Natural killer cell (primary cell): ENCODE measurements at regions of chr1 and their contacts with region 1.

Region 1: DNA sequence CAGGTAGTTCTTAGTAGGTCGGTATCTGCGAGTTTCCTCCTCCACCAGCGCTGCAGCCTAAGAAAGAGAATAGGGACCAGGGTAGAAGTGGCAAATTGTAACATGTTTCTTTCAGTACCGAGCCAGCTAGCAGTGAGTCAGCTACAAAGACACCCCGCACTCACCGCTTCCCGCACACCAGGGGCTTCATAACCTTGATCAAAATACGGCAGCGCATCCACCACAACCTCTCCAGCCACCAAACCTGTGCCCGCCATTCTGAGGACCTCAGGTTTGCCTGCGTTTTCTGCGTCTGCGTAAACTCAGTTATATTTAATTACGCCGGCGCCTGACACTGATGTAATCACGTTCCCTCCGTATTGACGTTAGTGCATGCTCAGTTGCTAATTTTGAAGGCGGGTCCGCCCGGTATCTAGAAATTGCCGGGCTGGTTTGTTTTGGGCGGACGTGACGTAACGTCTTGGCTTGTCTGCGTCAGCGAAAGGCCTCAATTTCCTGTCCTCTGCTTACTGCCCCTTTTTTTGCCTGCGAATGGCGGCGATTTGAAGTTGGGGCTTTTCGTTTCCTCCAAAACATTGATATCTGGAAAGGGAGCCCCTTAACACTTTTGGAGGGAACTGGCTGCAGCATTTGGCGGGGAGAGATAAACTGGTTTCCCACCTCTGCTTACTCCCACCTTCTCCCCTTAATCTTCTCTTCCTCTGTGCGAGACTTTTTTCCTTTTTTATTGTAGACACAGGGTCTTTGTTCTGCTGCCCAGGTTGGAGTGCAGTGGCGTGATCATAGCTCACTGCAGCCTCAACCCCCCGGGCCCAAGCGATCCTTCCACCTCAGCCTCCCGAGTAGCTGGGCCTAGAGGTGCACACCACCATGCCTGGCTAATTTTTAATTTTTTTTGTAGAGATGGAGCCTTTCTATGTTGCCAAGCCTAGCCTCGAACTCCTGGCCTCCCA is at the start of gene BCAS2:
- DNase-seq: peak; percentile 91 to 99
- ATAC-seq: peak; percentile 93 to 97 (median 95)
- H3K4me3 ChIP-seq: peak within 1 kb of the TSS; percentile 75
- H3K4me3 Mint-ChIP-seq: peak within 1 kb of the TSS; percentile 96
- H3K27ac ChIP-seq: peak within 1 kb of the TSS; percentile 95
- H3K27ac Mint-ChIP-seq: peak within 1 kb of the TSS; percentile 98 to 99
- H3K4me1 ChIP-seq: peaks cover 8% of the 10 kb centered on the region
- H3K4me1 Mint-ChIP-seq: peaks cover 30 to 33% of the 10 kb centered on the region in 2 donors
- H3K27me3 ChIP-seq: peaks cover 4% of the 10 kb centered on the region
- H3K27me3 Mint-ChIP-seq: peaks cover 4 to 21% of the 10 kb centered on the region in 2 donors
- CTCF ChIP-seq: no peak
- total RNA-seq, gene BCAS2: 45.5 to 76.7 (median 62.0) TPM

Region 2: DNA sequence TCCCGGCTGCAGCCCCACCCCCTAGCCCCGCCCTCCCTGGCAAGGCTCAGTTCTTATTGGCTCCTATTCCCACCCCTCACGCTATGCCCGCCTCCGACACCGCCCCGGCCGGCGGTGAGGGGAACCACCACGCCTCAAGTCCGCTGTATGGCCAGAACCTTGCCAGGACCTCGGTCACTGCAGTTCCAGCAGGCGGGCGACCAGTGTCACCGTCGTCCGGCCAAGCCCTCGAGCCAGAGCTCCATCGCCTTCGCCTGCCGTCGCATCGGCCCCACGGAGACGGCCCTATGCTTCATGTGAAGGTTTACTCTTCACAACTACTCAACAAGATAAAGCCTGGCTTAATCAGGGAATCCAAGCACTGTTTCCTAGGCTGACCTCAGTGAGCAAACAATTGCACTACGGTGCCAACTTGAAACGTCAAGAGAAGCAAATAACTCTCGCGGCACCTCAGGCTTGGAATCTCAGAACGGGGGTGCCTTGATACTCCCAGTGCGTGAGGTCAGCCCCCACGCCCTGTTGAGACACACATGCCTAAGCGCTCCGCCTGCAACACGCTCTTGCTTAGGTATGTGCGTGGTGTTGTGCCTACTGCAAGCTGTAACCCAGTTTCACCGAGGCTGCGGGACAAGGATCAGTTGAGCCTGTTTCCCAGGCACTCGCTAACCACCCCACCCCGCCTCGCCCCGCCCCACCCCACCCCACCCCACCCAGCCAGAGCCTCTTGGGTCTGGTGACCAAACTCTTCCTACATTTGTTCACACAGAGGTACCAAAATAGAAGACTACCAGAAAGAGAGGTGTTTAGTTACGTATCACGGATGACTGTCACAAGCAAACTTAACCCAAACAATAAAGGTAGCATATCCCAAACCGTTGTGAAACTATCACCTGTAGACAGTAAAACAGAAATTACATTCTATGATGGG is 88.7 kb after region 1 on chr1:
- intact Hi-C with region 1: loop called (anchors 1 kb)
- DNase-seq: peak; percentile 75 to 89
- ATAC-seq: peak; percentile 96 to 99 (median 98)
- H3K4me3 ChIP-seq: peak overlapping the region; percentile 85
- H3K4me3 Mint-ChIP-seq: peak overlapping the region; percentile 91
- H3K27ac ChIP-seq: no peak overlapping the region
- H3K27ac Mint-ChIP-seq: peak overlapping the region in 1 of 2 donors; percentile 79
- H3K4me1 ChIP-seq: peaks cover 13% of the 10 kb centered on the region
- H3K4me1 Mint-ChIP-seq: peaks cover 6 to 9% of the 10 kb centered on the region in 2 donors
- H3K27me3 ChIP-seq: peaks cover 13% of the 10 kb centered on the region
- H3K27me3 Mint-ChIP-seq: peaks cover 33 to 35% of the 10 kb centered on the region in 2 donors
- CTCF ChIP-seq: no peak

Region 3: GRCh38 chr1:114716304-114717170 is 134.9 kb after region 1 on chr1 and contains the start of gene NRAS:
- intact Hi-C with region 1: loop called (anchors 1 kb)
- DNase-seq: peak; percentile 97
- ATAC-seq: peak; percentile 93 to 99 (median 96)
- H3K4me3 ChIP-seq: peak within 1 kb of the TSS; percentile 89
- H3K4me3 Mint-ChIP-seq: peak within 1 kb of the TSS; percentile 97
- H3K27ac ChIP-seq: peak within 1 kb of the TSS; percentile 96
- H3K27ac Mint-ChIP-seq: peak within 1 kb of the TSS; percentile 98 to 99
- H3K4me1 ChIP-seq: peaks cover 13% of the 10 kb centered on the region
- H3K4me1 Mint-ChIP-seq: peaks cover 25% of the 10 kb centered on the region in 2 donors
- H3K27me3 ChIP-seq: no peaks in the 10 kb centered on the region
- H3K27me3 Mint-ChIP-seq: no peaks in the 10 kb centered on the region
- CTCF ChIP-seq: no peak
- total RNA-seq, gene NRAS: 41.1 to 45.7 (median 43.8) TPM

Region 4: GRCh38 chr1:115098979-115099692 is 517.5 kb after region 1 on chr1:
- intact Hi-C with region 1: loop called (anchors 1 kb)
- DNase-seq: peak; percentile 57 to 94
- ATAC-seq: peak; percentile 88 to 95 (median 93)
- H3K4me3 ChIP-seq: peak overlapping the region; percentile 65
- H3K4me3 Mint-ChIP-seq: peak overlapping the region; percentile 93
- H3K27ac ChIP-seq: peak overlapping the region; percentile 95
- H3K27ac Mint-ChIP-seq: peak overlapping the region; percentile 99
- H3K4me1 ChIP-seq: peaks cover 20% of the 10 kb centered on the region
- H3K4me1 Mint-ChIP-seq: peaks cover 34 to 44% of the 10 kb centered on the region in 2 donors
- H3K27me3 ChIP-seq: no peaks in the 10 kb centered on the region
- H3K27me3 Mint-ChIP-seq: no peaks in the 10 kb centered on the region
- CTCF ChIP-seq: no peak

Region 5: DNA sequence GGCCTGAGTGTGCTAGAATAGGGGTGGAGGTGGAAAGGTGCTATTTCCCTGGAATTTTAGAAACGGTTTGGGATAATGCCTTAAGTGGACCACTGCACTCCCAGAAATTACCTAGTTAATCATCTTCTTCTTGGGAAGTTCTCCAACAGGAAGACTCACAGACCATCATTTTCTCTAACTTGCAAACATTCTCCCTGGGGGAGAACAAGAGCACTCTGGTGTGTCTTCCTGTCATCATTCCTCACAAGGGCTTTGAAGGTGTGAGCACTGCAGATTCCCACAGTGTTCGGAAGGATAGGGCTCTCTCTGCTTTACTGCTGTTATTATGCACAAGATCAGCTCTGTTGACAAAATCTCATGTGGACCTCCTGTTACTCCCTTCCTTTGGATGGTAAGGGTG is 562.6 kb after region 1 on chr1:
- intact Hi-C with region 1: no loop called
- DNase-seq: no peak
- ATAC-seq: no peak
- H3K4me3 ChIP-seq: no peak overlapping the region
- H3K4me3 Mint-ChIP-seq: no peak overlapping the region
- H3K27ac ChIP-seq: no peak overlapping the region
- H3K27ac Mint-ChIP-seq: no peak overlapping the region
- H3K4me1 ChIP-seq: no peaks in the 10 kb centered on the region
- H3K4me1 Mint-ChIP-seq: peaks cover 2 to 6% of the 10 kb centered on the region in 2 donors
- H3K27me3 ChIP-seq: no peaks in the 10 kb centered on the region
- H3K27me3 Mint-ChIP-seq: peaks cover 45 to 46% of the 10 kb centered on the region in 2 donors
- CTCF ChIP-seq: no peak